CD8-positive, alpha-beta T cell (primary cell): ENCODE measurements at regions of chr1 and their contacts with region 1.

Region 1: GRCh38 chr1:19582302-19582701 is 61.8 kb upstream of the NBL1 start:
- DNase-seq: peak; percentile 58 to 87 (median 80)
- ATAC-seq: peak; percentile 78
- H3K4me3 ChIP-seq: no peak overlapping the region
- H3K4me3 Mint-ChIP-seq: no peak overlapping the region
- H3K27ac ChIP-seq: no peak overlapping the region
- H3K27ac Mint-ChIP-seq: no peak overlapping the region
- H3K4me1 ChIP-seq: no peaks in the 10 kb centered on the region
- H3K4me1 Mint-ChIP-seq: peaks cover 8% of the 10 kb centered on the region
- H3K27me3 ChIP-seq: no peaks in the 10 kb centered on the region
- H3K27me3 Mint-ChIP-seq: no peaks in the 10 kb centered on the region
- CTCF ChIP-seq: peak; percentile 87

Region 2: GRCh38 chr1:18949686-18950400 is 632.5 kb before region 1 on chr1:
- CTCF ChIA-PET with region 1: no interaction called
- POLR2A ChIA-PET with region 1: no interaction called
- intact Hi-C with region 1: no loop called
- DNase-seq: peak in 3 of 9 experiments; percentile 35 to 48 (median 37)
- ATAC-seq: no peak
- H3K4me3 ChIP-seq: peak overlapping the region; percentile 20 to 23
- H3K4me3 Mint-ChIP-seq: peak overlapping the region; percentile 82
- H3K27ac ChIP-seq: peak overlapping the region; percentile 95 to 96
- H3K27ac Mint-ChIP-seq: peak overlapping the region; percentile 98
- H3K4me1 ChIP-seq: peaks cover 98% of the 10 kb centered on the region
- H3K4me1 Mint-ChIP-seq: peaks cover 96% of the 10 kb centered on the region
- H3K27me3 ChIP-seq: no peaks in the 10 kb centered on the region
- H3K27me3 Mint-ChIP-seq: no peaks in the 10 kb centered on the region
- CTCF ChIP-seq: no peak

Region 3: GRCh38 chr1:19341201-19342072 is 240.9 kb before region 1 on chr1:
- CTCF ChIA-PET with region 1: interaction called, 40 read pairs
- POLR2A ChIA-PET with region 1: no interaction called
- intact Hi-C with region 1: loop called (anchors 1 kb)
- DNase-seq: peak; percentile 55 to 79 (median 72)
- ATAC-seq: peak; percentile 94
- H3K4me3 ChIP-seq: no peak overlapping the region
- H3K4me3 Mint-ChIP-seq: no peak overlapping the region
- H3K27ac ChIP-seq: no peak overlapping the region
- H3K27ac Mint-ChIP-seq: no peak overlapping the region
- H3K4me1 ChIP-seq: no peaks in the 10 kb centered on the region
- H3K4me1 Mint-ChIP-seq: peaks cover 6% of the 10 kb centered on the region
- H3K27me3 ChIP-seq: no peaks in the 10 kb centered on the region
- H3K27me3 Mint-ChIP-seq: no peaks in the 10 kb centered on the region
- CTCF ChIP-seq: peak; percentile 88

Region 4: GRCh38 chr1:19390901-19391595 is 191.3 kb before region 1 on chr1:
- CTCF ChIA-PET with region 1: interaction called, 36 read pairs
- POLR2A ChIA-PET with region 1: no interaction called
- intact Hi-C with region 1: loop called (anchors 1 kb)
- DNase-seq: peak; percentile 46 to 87 (median 68)
- ATAC-seq: peak; percentile 70
- H3K4me3 ChIP-seq: peak overlapping the region; percentile 34 to 38
- H3K4me3 Mint-ChIP-seq: peak overlapping the region; percentile 85
- H3K27ac ChIP-seq: peak overlapping the region; percentile 50 to 66
- H3K27ac Mint-ChIP-seq: peak overlapping the region; percentile 90
- H3K4me1 ChIP-seq: peaks cover 54% of the 10 kb centered on the region
- H3K4me1 Mint-ChIP-seq: peaks cover 77% of the 10 kb centered on the region
- H3K27me3 ChIP-seq: no peaks in the 10 kb centered on the region
- H3K27me3 Mint-ChIP-seq: no peaks in the 10 kb centered on the region
- CTCF ChIP-seq: peak; percentile 88

Region 5: DNA sequence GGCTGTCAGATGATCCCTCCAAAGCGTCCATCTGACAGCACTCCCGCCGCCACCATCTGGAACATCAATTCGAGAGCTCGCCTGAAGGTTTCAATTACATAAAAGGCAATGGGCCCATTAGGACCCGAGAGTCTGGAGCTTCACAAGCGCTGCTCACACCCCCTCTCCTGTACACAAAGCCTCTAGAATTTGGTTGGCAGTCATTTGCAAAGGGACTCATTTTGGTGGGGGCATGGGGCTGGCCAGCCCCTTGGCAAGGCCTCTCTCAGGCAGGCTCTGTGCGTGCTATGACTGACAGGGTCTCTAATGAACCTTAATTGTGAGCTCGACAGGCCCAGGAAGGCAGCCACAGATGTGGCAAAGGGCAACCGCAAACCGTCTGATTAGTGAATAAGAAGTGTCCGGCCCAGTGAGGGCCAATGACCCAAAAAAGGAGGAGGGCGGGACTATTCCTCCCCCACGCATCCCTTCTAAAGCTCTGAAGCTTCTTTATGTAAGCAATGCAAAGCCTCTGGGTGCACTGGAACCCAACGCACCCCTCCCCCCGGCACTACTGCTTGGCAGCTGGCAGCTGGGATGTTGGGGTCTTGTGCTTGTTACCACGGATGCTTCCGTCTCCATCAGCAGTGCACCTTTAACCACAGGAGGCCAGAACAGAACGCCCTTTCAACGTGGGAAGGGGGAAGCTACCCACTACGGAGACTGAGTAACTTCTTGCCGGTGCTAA is 176.4 kb before region 1 on chr1:
- CTCF ChIA-PET with region 1: interaction called, 15 read pairs
- POLR2A ChIA-PET with region 1: no interaction called
- intact Hi-C with region 1: no loop called
- DNase-seq: peak in 4 of 9 experiments; percentile 21 to 52 (median 50)
- ATAC-seq: peak; percentile 73
- H3K4me3 ChIP-seq: no peak overlapping the region
- H3K4me3 Mint-ChIP-seq: peak overlapping the region; percentile 42
- H3K27ac ChIP-seq: peak overlapping the region in 1 of 2 experiments; percentile 33
- H3K27ac Mint-ChIP-seq: peak overlapping the region; percentile 78
- H3K4me1 ChIP-seq: peaks cover 53% of the 10 kb centered on the region
- H3K4me1 Mint-ChIP-seq: peaks cover 84% of the 10 kb centered on the region
- H3K27me3 ChIP-seq: no peaks in the 10 kb centered on the region
- H3K27me3 Mint-ChIP-seq: no peaks in the 10 kb centered on the region
- CTCF ChIP-seq: no peak

Region 6: GRCh38 chr1:19439464-19440171 is 142.7 kb before region 1 on chr1:
- CTCF ChIA-PET with region 1: interaction called, 78 read pairs
- POLR2A ChIA-PET with region 1: interaction called, 3 read pairs
- intact Hi-C with region 1: loop called (anchors 1 kb)
- DNase-seq: peak; percentile 14 to 69 (median 58)
- ATAC-seq: peak; percentile 82
- H3K4me3 ChIP-seq: no peak overlapping the region
- H3K4me3 Mint-ChIP-seq: peak overlapping the region; percentile 22
- H3K27ac ChIP-seq: peak overlapping the region in 1 of 2 experiments; percentile 37
- H3K27ac Mint-ChIP-seq: peak overlapping the region; percentile 85
- H3K4me1 ChIP-seq: peaks cover 80% of the 10 kb centered on the region
- H3K4me1 Mint-ChIP-seq: peaks cover 90% of the 10 kb centered on the region
- H3K27me3 ChIP-seq: no peaks in the 10 kb centered on the region
- H3K27me3 Mint-ChIP-seq: no peaks in the 10 kb centered on the region
- CTCF ChIP-seq: peak; percentile 47

Region 7: GRCh38 chr1:19643602-19644394 is 61.5 kb after region 1 on chr1 and contains the start of gene NBL1:
- CTCF ChIA-PET with region 1: interaction called, 11 read pairs
- POLR2A ChIA-PET with region 1: no interaction called
- intact Hi-C with region 1: no loop called
- DNase-seq: peak; percentile 58 to 89 (median 77)
- ATAC-seq: peak; percentile 89
- H3K4me3 ChIP-seq: peak within 1 kb of the TSS; percentile 55 to 78
- H3K4me3 Mint-ChIP-seq: peak within 1 kb of the TSS; percentile 98
- H3K27ac ChIP-seq: peak within 1 kb of the TSS in 1 of 2 experiments; percentile 45
- H3K27ac Mint-ChIP-seq: peak within 1 kb of the TSS; percentile 95
- H3K4me1 ChIP-seq: peaks cover 32% of the 10 kb centered on the region
- H3K4me1 Mint-ChIP-seq: peaks cover 33% of the 10 kb centered on the region
- H3K27me3 ChIP-seq: peaks cover 0 to 2% of the 10 kb centered on the region in 2 experiments
- H3K27me3 Mint-ChIP-seq: peaks cover 16% of the 10 kb centered on the region
- CTCF ChIP-seq: no peak
- total RNA-seq, gene NBL1: 76.5 to 80.5 TPM